ENCODE measurements at regions of chr11 and their contacts with region 1.

Region 1: DNA sequence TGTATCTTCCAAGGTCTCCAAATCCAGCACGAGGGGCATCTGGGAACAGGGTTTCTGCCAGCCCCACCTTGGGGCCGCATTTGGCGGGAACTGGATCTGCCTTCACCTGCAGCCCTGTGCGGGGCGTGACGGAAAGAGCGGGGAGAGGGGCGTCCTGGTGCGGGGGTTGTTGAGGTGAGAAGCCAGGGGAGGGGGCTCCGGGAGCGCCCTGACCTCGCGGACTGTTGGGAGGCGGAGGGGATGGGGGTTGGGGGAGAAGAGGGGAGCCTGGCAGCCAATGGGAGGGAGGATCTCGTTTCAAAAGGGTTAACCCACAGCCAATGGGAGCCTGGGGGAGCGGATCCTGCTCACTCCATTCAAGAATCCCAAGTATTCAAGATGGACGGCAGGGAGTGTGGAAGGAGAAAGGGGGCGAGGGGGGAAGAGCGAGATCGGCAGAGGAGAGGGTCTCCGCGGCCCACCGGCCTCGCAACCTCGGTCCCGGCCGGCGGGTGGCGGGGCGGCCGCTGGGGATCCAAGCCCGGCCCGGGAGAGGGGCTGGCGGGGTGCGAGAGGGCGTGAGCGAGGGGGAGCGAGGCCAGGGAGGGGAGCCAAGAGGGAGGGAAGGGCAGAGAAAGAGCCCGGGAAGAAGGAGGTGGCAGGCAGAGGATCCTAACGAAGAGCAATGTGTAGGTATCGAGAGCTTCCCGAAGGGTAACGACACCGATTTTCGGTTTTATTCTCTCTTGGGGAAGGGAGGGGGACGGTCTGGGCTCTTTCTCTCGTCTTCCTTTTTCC is 11.5 kb downstream of the YPEL4 start:
- DNase-seq: peak; percentile 71
- H3K4me3 ChIP-seq: peak overlapping the region; percentile 57 to 89 (median 89)
- H3K27ac ChIP-seq: peak overlapping the region; percentile 81
- H3K4me1 ChIP-seq: peaks cover 47% of the 10 kb centered on the region
- H3K27me3 ChIP-seq: no peaks in the 10 kb centered on the region
- CTCF ChIP-seq: no peak

Region 2: DNA sequence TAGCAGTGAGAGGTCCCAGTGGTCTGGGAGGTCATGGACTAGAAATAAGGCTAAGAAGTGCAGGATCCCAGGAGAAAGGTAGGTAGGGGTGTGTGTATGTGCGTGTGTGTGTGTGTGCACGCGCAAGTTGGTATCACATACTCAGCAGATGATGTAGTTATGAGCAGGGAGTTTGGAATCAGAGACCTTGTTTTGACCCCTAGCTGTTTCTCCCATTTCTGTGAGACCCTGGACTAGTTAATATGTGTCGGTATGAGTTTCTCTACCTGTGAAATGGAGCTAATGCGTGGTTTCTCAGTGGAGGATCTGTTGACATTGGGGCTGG is 39.4 kb before region 1 on chr11:
- CTCF ChIA-PET with region 1: no interaction called
- dilution Hi-C with region 1: no loop called
- in situ Hi-C with region 1: no loop called
- intact Hi-C with region 1: loop called (anchors 1 kb)
- DNase-seq: no peak
- H3K4me3 ChIP-seq: peak overlapping the region in 1 of 3 experiments; percentile 54
- H3K27ac ChIP-seq: no peak overlapping the region
- H3K4me1 ChIP-seq: no peaks in the 10 kb centered on the region
- H3K27me3 ChIP-seq: no peaks in the 10 kb centered on the region
- CTCF ChIP-seq: no peak

Region 3: GRCh38 chr11:58152781-58153180 is 514.6 kb after region 1 on chr11:
- CTCF ChIA-PET with region 1: no interaction called
- dilution Hi-C with region 1: no loop called
- in situ Hi-C with region 1: no loop called
- intact Hi-C with region 1: no loop called
- DNase-seq: no peak
- H3K4me3 ChIP-seq: no peak overlapping the region
- H3K27ac ChIP-seq: no peak overlapping the region
- H3K4me1 ChIP-seq: no peaks in the 10 kb centered on the region
- H3K27me3 ChIP-seq: no peaks in the 10 kb centered on the region
- CTCF ChIP-seq: no peak